Ovary (tissue), 10 donors: ENCODE measurements at regions of chr2 and their contacts with region 1.

Region 1: DNA sequence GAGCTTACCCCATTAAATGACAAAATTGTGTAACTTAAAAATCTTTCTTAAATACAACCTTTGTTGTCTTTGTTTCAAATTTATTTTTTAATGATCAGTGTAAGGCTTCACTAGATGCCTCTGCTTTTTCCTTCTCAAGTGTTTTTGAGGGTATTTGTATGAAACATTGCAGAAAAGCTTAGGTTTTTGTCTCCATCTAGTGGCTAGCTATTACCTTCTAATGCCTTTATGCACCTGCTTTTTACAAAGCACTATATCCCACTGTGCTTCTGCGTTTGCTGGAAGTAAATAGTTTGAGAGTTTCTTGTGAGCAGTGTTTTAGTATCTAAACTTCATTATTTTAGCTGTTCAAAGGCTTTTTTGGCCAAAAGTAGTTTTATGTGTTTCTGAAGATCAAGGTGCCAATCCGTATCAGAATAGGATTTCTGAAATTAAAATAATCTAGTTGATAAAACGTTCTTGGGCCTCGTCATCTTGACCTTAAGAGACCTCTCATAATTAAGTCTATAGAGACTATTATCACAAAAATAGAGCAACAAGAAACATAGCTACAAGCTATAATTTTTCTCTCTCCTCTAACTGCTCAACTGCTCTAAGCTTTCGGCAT is 47.0 kb downstream of the IWS1 start:
- DNase-seq: no peak
- H3K4me3 ChIP-seq: no peak overlapping the region
- H3K27ac ChIP-seq: no peak overlapping the region
- H3K4me1 ChIP-seq: no peaks in the 10 kb centered on the region
- H3K27me3 ChIP-seq: no peaks in the 10 kb centered on the region
- CTCF ChIP-seq: peak in 2 of 3 donors; percentile 54 to 67
- EP300 ChIP-seq: no peak
- POLR2A ChIP-seq: no peak

Region 2: GRCh38 chr2:127324635-127325034 is 154.7 kb before region 1 on chr2:
- intact Hi-C with region 1: loop called in 3 of 4 experiments (anchors 5 to 10 kb)
- DNase-seq: peak in 1 of 5 donors; percentile 19
- H3K4me3 ChIP-seq: no peak overlapping the region
- H3K27ac ChIP-seq: no peak overlapping the region
- H3K4me1 ChIP-seq: no peaks in the 10 kb centered on the region
- H3K27me3 ChIP-seq: no peaks in the 10 kb centered on the region
- CTCF ChIP-seq: peak in 1 of 3 donors; percentile 45
- EP300 ChIP-seq: no peak
- POLR2A ChIP-seq: no peak

Region 3: GRCh38 chr2:127330753-127331152 is 148.6 kb before region 1 on chr2:
- intact Hi-C with region 1: loop called (anchors 5 to 10 kb)
- DNase-seq: no peak
- H3K4me3 ChIP-seq: no peak overlapping the region
- H3K27ac ChIP-seq: no peak overlapping the region
- H3K4me1 ChIP-seq: no peaks in the 10 kb centered on the region
- H3K27me3 ChIP-seq: no peaks in the 10 kb centered on the region
- CTCF ChIP-seq: no peak
- EP300 ChIP-seq: no peak
- POLR2A ChIP-seq: no peak